Posterior vena cava (tissue), 2 donors: ENCODE measurements at regions of chr19 and their contacts with region 1.

Region 1: GRCh38 chr19:11164879-11165406 is 9.4 kb upstream of the SPC24 start:
- DNase-seq: peak; percentile 96

Region 2: GRCh38 chr19:11197264-11198174 is 32.6 kb after region 1 on chr19 and contains the start of gene KANK2:
- intact Hi-C with region 1: loop called in 1 of 2 experiments (anchors 5 kb)
- DNase-seq: peak; percentile 93
- total RNA-seq, gene KANK2: 355 to 482 TPM

Region 3: DNA sequence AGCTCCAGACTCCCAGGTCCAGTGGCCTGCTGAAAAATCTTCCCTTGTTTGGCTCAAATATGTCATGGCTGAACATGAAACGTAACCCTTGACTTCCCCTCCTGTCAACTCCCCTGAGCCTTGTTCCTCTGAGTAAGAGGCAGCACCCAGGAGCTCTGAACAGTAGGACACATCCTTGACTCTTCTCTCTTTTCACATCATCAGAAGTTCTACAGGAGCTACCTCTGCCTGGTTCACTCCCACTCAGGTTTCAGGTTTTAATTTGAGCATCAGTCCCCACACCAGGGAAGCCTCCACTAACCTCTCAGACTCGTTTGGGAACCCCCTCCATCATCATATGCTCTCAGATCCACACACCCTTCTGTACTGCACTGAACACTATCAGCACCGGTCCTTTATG is 543.5 kb after region 1 on chr19:
- intact Hi-C with region 1: no loop called
- DNase-seq: no peak